ENCODE measurements at regions of chr15 and their contacts with region 1.

Region 1: GRCh38 chr15:42608110-42608531 is 32.7 kb downstream of the STARD9 start:
- DNase-seq: peak; percentile 87
- H3K4me3 Mint-ChIP-seq: peak overlapping the region; percentile 25
- H3K27ac Mint-ChIP-seq: peak overlapping the region; percentile 69
- H3K4me1 Mint-ChIP-seq: peaks cover 54% of the 10 kb centered on the region
- H3K27me3 Mint-ChIP-seq: no peaks in the 10 kb centered on the region

Region 2: DNA sequence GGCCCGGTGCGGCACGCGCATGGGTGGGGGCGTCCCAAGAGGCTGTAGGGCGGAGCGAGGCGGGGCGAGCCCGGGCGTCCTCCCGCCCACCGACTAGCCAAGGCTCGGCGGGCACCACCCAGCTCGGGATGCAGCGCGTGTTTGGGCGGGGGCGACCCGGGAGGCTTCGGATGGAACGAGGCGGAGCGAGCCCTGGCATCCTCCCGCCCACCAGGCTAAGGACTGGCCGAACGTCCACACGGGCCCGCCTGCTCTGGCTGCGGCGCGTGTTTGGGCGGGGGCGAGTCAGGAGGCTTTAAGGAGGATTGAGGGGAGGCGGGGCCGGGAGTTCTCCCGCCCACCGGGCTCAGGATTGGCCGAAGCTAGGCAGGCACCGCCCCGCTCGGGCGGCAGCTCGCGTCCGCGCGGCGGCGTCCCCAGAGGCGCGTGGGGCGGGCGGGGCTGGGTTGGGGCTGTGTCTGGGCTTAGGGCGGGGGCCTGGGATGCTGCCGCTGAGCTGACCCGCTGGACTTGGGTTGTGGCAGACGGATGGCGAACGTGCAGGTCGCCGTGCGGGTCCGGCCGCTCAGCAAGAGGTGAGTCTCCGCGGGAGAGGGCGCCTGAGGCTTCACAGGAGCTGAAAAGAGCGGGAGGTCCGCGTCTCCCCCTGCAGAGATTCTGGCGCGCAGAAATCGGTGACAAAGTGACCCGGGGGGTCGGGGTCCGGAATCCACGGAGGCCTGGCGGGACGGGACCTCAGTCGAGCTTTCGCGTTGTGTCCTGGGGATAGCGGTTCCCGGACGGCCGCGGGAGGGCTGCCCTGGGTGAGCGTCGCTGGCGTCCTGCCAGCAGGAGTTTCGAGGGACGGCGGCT is 32.7 kb before region 1 on chr15 and contains the start of gene STARD9:
- CTCF ChIA-PET with region 1: interaction called, 3 read pairs
- POLR2A ChIA-PET with region 1: interaction called, 20 read pairs
- DNase-seq: peak; percentile 96
- H3K4me3 Mint-ChIP-seq: peak within 1 kb of the TSS; percentile 90
- H3K27ac Mint-ChIP-seq: peak within 1 kb of the TSS; percentile 69
- H3K4me1 Mint-ChIP-seq: peaks cover 29% of the 10 kb centered on the region
- H3K27me3 Mint-ChIP-seq: peaks cover 24% of the 10 kb centered on the region
- total RNA-seq, gene STARD9: 8.2 TPM

Region 3: DNA sequence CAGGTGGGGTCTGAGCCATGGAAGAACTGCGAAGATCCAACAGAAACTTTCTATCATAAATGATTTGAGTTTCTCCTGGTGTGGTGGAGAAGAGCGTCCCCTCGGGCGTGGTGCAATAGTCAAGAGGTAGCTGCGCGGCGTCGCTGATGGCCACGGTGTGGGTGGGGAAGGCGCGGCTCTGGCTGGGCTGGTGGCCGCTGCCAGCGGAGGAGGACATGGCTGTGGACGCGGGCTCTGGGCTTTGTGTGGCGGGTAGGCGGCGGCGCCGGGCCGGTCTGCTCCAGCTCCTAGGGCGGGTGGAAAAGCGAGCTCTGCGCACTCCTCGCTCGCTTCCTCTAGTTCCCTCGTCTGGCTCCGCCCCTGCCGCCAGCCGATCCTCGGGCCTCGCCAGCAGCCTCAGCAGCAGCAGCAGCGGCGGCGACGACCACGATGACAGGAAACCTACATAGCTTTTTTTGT is 26.8 kb before region 1 on chr15:
- CTCF ChIA-PET with region 1: interaction called, 7 read pairs
- POLR2A ChIA-PET with region 1: interaction called, 20 read pairs
- DNase-seq: peak; percentile 86
- H3K4me3 Mint-ChIP-seq: peak overlapping the region; percentile 76
- H3K27ac Mint-ChIP-seq: peak overlapping the region; percentile 52
- H3K4me1 Mint-ChIP-seq: peaks cover 38% of the 10 kb centered on the region
- H3K27me3 Mint-ChIP-seq: peaks cover 26% of the 10 kb centered on the region